ENCODE measurements at regions of chr19 and their contacts with region 1.

Region 1: DNA sequence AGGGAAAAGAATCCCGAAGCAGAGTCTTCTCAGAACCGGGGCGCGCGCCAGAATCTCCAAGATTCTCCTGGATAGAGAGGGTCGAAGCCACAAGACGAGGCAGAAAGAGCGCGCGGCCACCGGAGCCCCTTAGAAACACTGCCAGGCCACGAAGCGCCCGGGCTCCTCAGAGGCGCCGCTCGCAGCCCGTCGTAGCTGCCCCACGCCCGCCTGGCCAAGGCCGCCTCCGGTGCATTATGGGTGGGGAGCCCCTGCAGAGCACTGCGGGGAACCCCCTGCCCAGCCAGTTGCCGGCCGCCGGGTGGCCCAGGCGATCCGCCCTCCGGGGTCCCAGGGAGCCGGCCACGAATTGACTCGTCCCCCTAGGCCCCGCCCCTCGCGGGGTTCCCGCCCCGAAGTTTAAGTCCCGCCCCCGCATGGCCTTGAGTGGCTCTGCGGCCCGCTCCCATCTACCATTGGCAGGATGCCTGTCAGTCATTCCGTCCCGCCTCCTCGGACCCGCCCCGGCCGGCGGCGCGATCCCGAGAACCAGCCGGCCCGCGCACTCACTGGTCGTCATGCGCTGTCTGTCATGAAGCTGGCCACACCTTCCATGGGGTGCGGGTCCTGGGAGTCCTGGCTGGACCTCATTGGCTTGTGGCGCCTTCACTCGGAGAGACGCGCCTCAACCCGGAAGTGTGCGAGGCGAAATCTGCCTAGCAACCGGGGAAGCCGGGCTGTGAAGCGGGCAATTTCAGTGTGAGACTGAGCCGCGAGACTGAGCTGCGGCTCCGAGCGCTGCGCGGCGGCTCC is 20.2 kb upstream of the GATAD2A start:
- DNase-seq: peak; percentile 99 to 100
- ATAC-seq: peak; percentile 98 to 99 (median 99)
- H3K4me3 ChIP-seq: peak overlapping the region; percentile 36 to 98 (median 88)
- H3K27ac ChIP-seq: peak overlapping the region; percentile 25 to 96 (median 90)
- H3K4me1 ChIP-seq: peaks cover 9 to 60% (median 48%) of the 10 kb centered on the region in 9 donors
- H3K27me3 ChIP-seq: no peaks in the 10 kb centered on the region
- CTCF ChIP-seq: peak in 7 of 9 donors; percentile 10 to 53 (median 31)

Region 2: DNA sequence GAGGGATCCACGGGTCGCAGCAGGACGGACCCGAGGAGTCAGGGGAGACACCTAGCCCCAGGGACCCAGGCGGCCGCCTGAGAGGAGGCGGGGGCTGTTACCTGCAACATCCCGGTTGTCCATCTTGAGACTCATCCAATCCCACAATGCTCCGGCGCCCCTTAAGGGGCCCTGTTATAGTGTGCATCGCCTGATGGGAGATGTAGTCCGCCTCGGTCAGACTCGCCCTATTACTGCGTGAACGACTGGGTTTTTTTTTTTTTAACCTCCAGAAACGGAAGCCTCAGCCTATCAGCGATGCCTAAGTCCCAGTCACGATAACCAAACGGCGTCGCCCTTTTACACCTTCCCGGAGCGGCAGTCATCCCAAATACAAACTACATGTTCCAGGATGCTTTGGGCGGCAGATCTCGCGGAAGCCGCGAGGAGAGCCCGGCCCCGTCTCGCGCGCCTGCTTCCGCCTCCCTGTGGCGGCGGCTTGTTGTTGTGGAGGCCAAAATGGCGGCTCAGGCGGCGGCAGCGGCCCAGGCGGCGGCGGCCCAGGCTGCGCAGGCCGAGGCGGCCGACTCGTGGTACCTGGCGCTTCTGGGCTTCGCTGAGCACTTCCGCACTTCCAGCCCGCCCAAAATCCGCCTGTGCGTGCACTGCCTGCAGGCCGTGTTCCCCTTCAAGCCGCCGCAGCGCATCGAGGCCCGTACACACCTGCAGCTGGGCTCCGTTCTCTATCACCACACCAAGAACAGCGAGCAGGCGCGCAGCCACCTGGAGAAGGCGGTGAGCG is 64.8 kb before region 1 on chr19 and contains the starts of genes MAU2 and SUGP1:
- intact Hi-C with region 1: no loop called
- DNase-seq: peak; percentile 88 to 89
- ATAC-seq: peak; percentile 93 to 98 (median 96)
- H3K4me3 ChIP-seq: peak within 1 kb of the TSS; percentile 75 to 100 (median 98)
- H3K27ac ChIP-seq: peak within 1 kb of the TSS; percentile 82 to 98 (median 92)
- H3K4me1 ChIP-seq: peaks cover 12 to 63% (median 47%) of the 10 kb centered on the region in 9 donors
- H3K27me3 ChIP-seq: no peaks in the 10 kb centered on the region
- CTCF ChIP-seq: peak in 8 of 9 donors; percentile 11 to 68 (median 50)
- total RNA-seq, gene MAU2: 29.3 to 48.6 (median 36.7) TPM
- total RNA-seq, gene SUGP1: 33.6 to 50.2 (median 44.8) TPM

Region 3: GRCh38 chr19:19434483-19435045 is 49.3 kb after region 1 on chr19:
- intact Hi-C with region 1: loop called in 1 of 10 experiments (anchors 1 kb)
- DNase-seq: peak; percentile 32 to 66
- ATAC-seq: peak; percentile 75 to 93 (median 83)
- H3K4me3 ChIP-seq: peak overlapping the region in 1 of 10 donors; percentile 9
- H3K27ac ChIP-seq: peak overlapping the region; percentile 53 to 85 (median 76)
- H3K4me1 ChIP-seq: peaks cover 17 to 92% (median 57%) of the 10 kb centered on the region in 9 donors
- H3K27me3 ChIP-seq: no peaks in the 10 kb centered on the region
- CTCF ChIP-seq: no peak

Region 4: DNA sequence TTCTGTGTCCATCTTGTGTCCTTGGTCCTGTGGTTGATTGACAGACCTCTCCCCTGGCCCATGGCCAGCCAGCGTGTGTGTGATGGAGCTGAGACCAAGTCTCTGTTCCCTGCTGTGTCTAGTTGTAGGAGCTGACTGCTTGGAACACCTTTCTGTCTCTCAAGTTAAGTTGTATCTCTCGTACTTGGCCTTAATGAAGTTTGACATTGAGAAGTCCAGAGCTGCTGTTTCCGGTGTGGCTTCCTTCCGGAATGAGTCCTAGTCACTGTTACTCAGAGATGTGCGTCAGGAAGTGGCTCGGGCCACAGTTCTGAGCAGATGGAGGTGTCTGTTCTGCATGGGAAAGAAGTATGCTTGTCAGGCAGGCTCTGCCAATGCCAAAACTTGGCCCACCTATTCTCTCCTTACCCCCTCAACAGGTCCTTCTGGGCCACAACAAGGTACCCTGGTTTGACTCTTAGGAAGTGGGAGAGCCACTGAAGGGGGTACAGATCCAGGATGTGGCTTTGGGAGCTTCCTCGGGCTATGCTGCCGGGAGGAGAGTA is 74.5 kb after region 1 on chr19:
- intact Hi-C with region 1: no loop called
- DNase-seq: no peak
- ATAC-seq: peak in 7 of 8 donors; percentile 16 to 60 (median 37)
- H3K4me3 ChIP-seq: peak overlapping the region in 4 of 10 donors; percentile 5 to 37 (median 18)
- H3K27ac ChIP-seq: peak overlapping the region; percentile 49 to 90 (median 72)
- H3K4me1 ChIP-seq: peaks cover 36 to 83% (median 71%) of the 10 kb centered on the region in 9 donors
- H3K27me3 ChIP-seq: no peaks in the 10 kb centered on the region
- CTCF ChIP-seq: no peak

Region 5: DNA sequence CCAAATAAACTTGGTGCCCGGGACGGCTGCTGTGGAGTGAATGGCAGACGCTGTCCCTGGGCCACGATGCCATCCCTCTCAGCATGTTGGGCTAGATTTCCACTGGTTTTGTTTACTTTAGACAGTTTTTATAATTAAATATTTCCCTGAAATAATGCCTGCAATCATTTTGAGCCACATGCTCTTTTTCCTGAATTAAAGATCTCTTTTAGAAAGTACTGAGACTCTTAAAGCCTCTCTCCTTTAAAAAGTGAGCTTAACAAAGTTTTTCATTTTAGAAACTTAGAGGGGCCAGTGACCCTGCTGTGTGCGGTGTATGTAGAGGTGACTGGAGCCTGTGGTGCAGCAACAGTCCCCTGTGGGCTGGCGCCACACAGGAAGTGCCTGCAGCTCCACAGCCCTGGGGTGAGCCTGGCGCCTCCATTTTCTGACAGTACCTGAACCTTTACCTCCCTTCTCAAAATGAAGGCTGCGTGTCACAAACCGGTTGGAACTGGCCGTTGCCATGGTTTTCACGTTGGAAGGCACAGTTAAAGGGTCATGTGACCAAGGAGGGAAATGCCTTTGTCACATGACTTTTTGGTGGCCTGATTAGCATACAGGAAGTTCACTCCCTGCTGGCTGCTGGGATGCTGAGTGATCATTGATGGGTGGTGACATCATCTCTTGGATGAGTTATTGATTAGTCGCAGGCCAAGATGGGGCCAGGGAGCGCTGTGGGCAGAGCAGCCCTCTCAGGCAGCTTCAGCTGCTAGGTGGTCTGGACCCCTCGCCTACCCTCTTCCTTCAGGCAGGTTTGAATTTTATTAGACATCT is 103.8 kb after region 1 on chr19:
- intact Hi-C with region 1: loop called in 1 of 10 experiments (anchors 5 kb)
- DNase-seq: peak; percentile 61 to 87
- ATAC-seq: peak; percentile 42 to 84 (median 73)
- H3K4me3 ChIP-seq: peak overlapping the region in 7 of 10 donors; percentile 18 to 47 (median 26)
- H3K27ac ChIP-seq: peak overlapping the region; percentile 36 to 91 (median 80)
- H3K4me1 ChIP-seq: peaks cover 22 to 66% (median 49%) of the 10 kb centered on the region in 9 donors
- H3K27me3 ChIP-seq: no peaks in the 10 kb centered on the region
- CTCF ChIP-seq: no peak

Measured in heart right ventricle (tissue), 16 donors.